CD4-positive, alpha-beta T cell (primary cell): ENCODE measurements at regions of chr3 and their contacts with region 1.

Region 1: GRCh38 chr3:48465531-48466378 is 19.2 kb downstream of the ATRIP start:
- DNase-seq: peak; percentile 62 to 89 (median 76)
- ATAC-seq: peak; percentile 96
- H3K4me3 ChIP-seq: peak overlapping the region; percentile 72
- H3K4me3 Mint-ChIP-seq: peak overlapping the region; percentile 87
- H3K27ac ChIP-seq: peak overlapping the region; percentile 94
- H3K27ac Mint-ChIP-seq: peak overlapping the region; percentile 94
- H3K4me1 ChIP-seq: peaks cover 66% of the 10 kb centered on the region
- H3K4me1 Mint-ChIP-seq: peaks cover 53% of the 10 kb centered on the region
- H3K27me3 ChIP-seq: no peaks in the 10 kb centered on the region
- H3K27me3 Mint-ChIP-seq: no peaks in the 10 kb centered on the region
- CTCF ChIP-seq: no peak

Region 2: GRCh38 chr3:48415554-48415953 is 50.2 kb before region 1 on chr3:
- CTCF ChIA-PET with region 1: no interaction called
- POLR2A ChIA-PET with region 1: no interaction called
- intact Hi-C with region 1: no loop called
- DNase-seq: no peak
- ATAC-seq: no peak
- H3K4me3 ChIP-seq: no peak overlapping the region
- H3K4me3 Mint-ChIP-seq: no peak overlapping the region
- H3K27ac ChIP-seq: no peak overlapping the region
- H3K27ac Mint-ChIP-seq: no peak overlapping the region
- H3K4me1 ChIP-seq: no peaks in the 10 kb centered on the region
- H3K4me1 Mint-ChIP-seq: no peaks in the 10 kb centered on the region
- H3K27me3 ChIP-seq: no peaks in the 10 kb centered on the region
- H3K27me3 Mint-ChIP-seq: no peaks in the 10 kb centered on the region
- CTCF ChIP-seq: no peak

Region 3: DNA sequence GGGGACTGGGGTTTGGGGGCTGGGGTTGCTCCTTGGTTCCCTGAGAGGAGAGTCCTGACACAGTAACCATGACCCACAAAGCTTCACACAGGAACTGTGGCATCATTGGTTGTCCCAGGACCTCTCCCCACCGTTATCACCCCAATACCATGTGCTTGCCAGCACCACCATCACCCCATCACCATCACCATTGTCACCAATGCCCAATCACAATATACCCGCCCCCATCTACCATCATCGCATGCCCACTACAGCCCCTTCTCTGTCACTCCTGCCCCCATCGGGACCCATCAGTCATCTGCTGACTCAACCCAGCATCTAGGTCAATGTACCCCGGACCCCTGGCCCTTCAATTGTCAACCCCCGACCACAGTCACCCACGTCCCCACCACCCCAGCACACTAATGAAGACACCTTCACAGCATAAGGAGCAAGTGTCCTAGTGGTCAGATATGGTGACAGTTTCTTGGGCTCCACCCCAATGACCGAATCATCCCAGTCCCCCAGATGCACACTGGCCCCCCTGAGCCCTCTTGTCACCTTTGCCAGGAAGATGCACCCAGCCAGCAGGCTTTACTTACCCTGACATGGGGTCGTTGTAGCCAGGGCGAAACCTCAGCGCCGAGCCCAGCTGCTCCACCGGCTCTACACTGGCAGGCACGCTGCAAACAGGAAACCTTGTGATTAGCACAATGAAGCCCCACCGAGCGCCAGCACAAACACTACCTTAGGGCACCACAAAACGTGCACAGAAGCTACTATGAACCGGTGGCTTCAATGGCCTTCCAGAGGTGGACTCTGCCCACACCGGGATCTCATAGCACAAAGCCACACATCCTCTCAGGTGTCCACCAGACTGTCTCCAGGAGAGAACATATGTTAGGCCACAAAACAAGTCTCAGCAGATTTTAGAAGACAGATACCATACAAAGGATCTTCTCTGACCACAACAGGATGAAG is 13.1 kb after region 1 on chr3:
- CTCF ChIA-PET with region 1: no interaction called
- POLR2A ChIA-PET with region 1: interaction called, 26 read pairs
- intact Hi-C with region 1: no loop called
- DNase-seq: peak; percentile 38 to 87 (median 59)
- ATAC-seq: peak; percentile 85
- H3K4me3 ChIP-seq: peak overlapping the region; percentile 47
- H3K4me3 Mint-ChIP-seq: peak overlapping the region; percentile 89
- H3K27ac ChIP-seq: peak overlapping the region; percentile 67 to 75
- H3K27ac Mint-ChIP-seq: peak overlapping the region; percentile 95
- H3K4me1 ChIP-seq: peaks cover 61% of the 10 kb centered on the region
- H3K4me1 Mint-ChIP-seq: peaks cover 36% of the 10 kb centered on the region
- H3K27me3 ChIP-seq: no peaks in the 10 kb centered on the region
- H3K27me3 Mint-ChIP-seq: no peaks in the 10 kb centered on the region
- CTCF ChIP-seq: no peak

Region 4: DNA sequence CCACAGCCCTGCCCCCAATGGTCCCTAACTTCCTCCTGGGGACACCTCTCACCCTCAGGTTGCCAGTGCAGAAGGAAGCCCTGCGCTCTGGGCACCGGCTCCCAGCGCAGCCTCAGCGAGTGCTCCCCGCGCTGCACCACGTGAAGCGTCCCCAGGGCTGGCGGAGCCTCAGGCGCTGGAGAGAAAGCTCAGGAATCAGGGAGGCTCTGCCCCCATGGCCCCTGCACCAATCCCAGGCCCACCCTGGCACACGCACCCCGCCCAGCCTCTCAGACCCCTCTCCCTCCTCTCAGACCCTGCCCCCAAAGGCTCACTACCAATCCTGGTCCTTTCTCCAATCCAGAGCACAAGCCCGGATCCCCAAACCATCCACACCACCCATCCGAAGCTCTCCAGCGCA is 122.5 kb after region 1 on chr3:
- CTCF ChIA-PET with region 1: no interaction called
- POLR2A ChIA-PET with region 1: no interaction called
- intact Hi-C with region 1: no loop called
- DNase-seq: no peak
- ATAC-seq: no peak
- H3K4me3 ChIP-seq: no peak overlapping the region
- H3K4me3 Mint-ChIP-seq: no peak overlapping the region
- H3K27ac ChIP-seq: no peak overlapping the region
- H3K27ac Mint-ChIP-seq: no peak overlapping the region
- H3K4me1 ChIP-seq: no peaks in the 10 kb centered on the region
- H3K4me1 Mint-ChIP-seq: no peaks in the 10 kb centered on the region
- H3K27me3 ChIP-seq: peaks cover 4 to 10% of the 10 kb centered on the region in 2 experiments
- H3K27me3 Mint-ChIP-seq: peaks cover 43% of the 10 kb centered on the region
- CTCF ChIP-seq: no peak